Naive thymus-derived CD4-positive, alpha-beta T cell (primary cell): ENCODE measurements at regions of chr11 and their contacts with region 1.

Region 1: GRCh38 chr11:535519-536454 is at the start of gene HRAS:
- DNase-seq: peak; percentile 92 to 99 (median 96)
- ATAC-seq: peak; percentile 93
- H3K4me3 ChIP-seq: peak within 1 kb of the TSS; percentile 66
- H3K4me3 Mint-ChIP-seq: peak within 1 kb of the TSS; percentile 87 to 97 (median 91)
- H3K27ac ChIP-seq: peak within 1 kb of the TSS; percentile 75
- H3K27ac Mint-ChIP-seq: peak within 1 kb of the TSS; percentile 84 to 96 (median 91)
- H3K4me1 ChIP-seq: peaks cover 20 to 21% of the 10 kb centered on the region in 2 donors
- H3K4me1 Mint-ChIP-seq: peaks cover 5 to 16% (median 11%) of the 10 kb centered on the region in 7 donors
- H3K27me3 ChIP-seq: no peaks in the 10 kb centered on the region
- H3K27me3 Mint-ChIP-seq: no peaks in the 10 kb centered on the region
- total RNA-seq, gene HRAS: 22.3 to 52.0 (median 31.9) TPM

Region 2: GRCh38 chr11:406978-407739 is 128.6 kb before region 1 on chr11:
- CTCF ChIA-PET with region 1: no interaction called
- POLR2A ChIA-PET with region 1: interaction called, 3 read pairs
- intact Hi-C with region 1: loop called in 1 of 2 experiments (anchors 2 kb)
- DNase-seq: peak; percentile 80 to 93 (median 92)
- ATAC-seq: peak; percentile 90
- H3K4me3 ChIP-seq: no peak overlapping the region
- H3K4me3 Mint-ChIP-seq: peak overlapping the region in 6 of 10 donors; percentile 12 to 60 (median 38)
- H3K27ac ChIP-seq: peak overlapping the region; percentile 75
- H3K27ac Mint-ChIP-seq: peak overlapping the region in 7 of 9 donors; percentile 21 to 85 (median 51)
- H3K4me1 ChIP-seq: peaks cover 9 to 13% of the 10 kb centered on the region in 2 donors
- H3K4me1 Mint-ChIP-seq: peaks cover 4 to 21% (median 6%) of the 10 kb centered on the region in 7 donors
- H3K27me3 ChIP-seq: no peaks in the 10 kb centered on the region
- H3K27me3 Mint-ChIP-seq: no peaks in the 10 kb centered on the region

Region 3: GRCh38 chr11:518463-519250 is 17.1 kb before region 1 on chr11:
- CTCF ChIA-PET with region 1: interaction called, 7 read pairs
- POLR2A ChIA-PET with region 1: interaction called, 3 read pairs
- intact Hi-C with region 1: loop called (anchors 1 kb)
- DNase-seq: peak; percentile 69 to 94 (median 87)
- ATAC-seq: peak; percentile 99
- H3K4me3 ChIP-seq: peak overlapping the region; percentile 28
- H3K4me3 Mint-ChIP-seq: peak overlapping the region; percentile 81 to 91 (median 87)
- H3K27ac ChIP-seq: peak overlapping the region; percentile 58
- H3K27ac Mint-ChIP-seq: peak overlapping the region; percentile 70 to 92 (median 85)
- H3K4me1 ChIP-seq: peaks cover 4% of the 10 kb centered on the region in 2 donors
- H3K4me1 Mint-ChIP-seq: peaks cover 2 to 8% (median 4%) of the 10 kb centered on the region in 7 donors
- H3K27me3 ChIP-seq: no peaks in the 10 kb centered on the region
- H3K27me3 Mint-ChIP-seq: no peaks in the 10 kb centered on the region

Region 4: DNA sequence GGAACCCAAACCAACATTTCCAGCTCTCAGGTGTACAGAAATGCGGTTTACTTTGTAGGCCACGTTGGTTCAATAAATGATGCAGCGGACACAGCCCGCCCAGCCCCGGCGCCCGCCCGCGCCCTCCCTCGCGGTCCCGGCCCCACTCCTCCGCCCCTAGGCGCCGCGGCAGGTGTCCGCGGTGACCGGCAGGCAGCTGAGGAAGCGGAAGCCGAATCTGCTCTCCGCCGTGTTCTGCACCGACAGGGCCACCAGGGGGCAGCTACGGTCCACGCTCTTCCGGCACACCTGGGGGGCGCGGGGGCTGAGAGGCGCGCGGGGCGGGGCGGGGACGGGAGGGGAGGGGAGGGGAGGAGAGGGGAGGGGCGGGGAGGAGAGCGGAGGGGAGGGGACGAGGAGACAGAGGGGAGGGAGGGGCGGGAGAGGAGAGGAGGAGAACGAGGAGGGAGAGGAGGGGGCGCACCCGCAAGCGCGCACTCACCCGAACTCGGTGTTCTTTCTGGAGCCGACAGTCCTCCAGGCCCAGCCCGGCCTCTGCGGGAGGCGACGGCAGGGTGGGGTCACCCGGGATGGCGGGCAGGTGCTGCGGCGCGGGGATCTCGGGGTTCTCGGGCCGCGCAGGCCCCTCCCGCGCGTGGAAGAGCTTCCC is 19.2 kb after region 1 on chr11:
- CTCF ChIA-PET with region 1: no interaction called
- POLR2A ChIA-PET with region 1: interaction called, 12 read pairs
- intact Hi-C with region 1: loop called (anchors 1 to 2 kb)
- DNase-seq: peak; percentile 60 to 80 (median 72)
- ATAC-seq: peak; percentile 89
- H3K4me3 ChIP-seq: peak overlapping the region; percentile 46
- H3K4me3 Mint-ChIP-seq: peak overlapping the region in 7 of 10 donors; percentile 36 to 69 (median 57)
- H3K27ac ChIP-seq: peak overlapping the region; percentile 44
- H3K27ac Mint-ChIP-seq: no peak overlapping the region
- H3K4me1 ChIP-seq: peaks cover 9 to 16% of the 10 kb centered on the region in 2 donors
- H3K4me1 Mint-ChIP-seq: peaks cover 3 to 8% (median 7%) of the 10 kb centered on the region in 7 donors
- H3K27me3 ChIP-seq: no peaks in the 10 kb centered on the region
- H3K27me3 Mint-ChIP-seq: peaks cover 0 to 18% (median 0%) of the 10 kb centered on the region in 5 donors

Region 5: GRCh38 chr11:560305-561147 is 24.7 kb after region 1 on chr11 and contains the starts of genes LMNTD2 and RASSF7:
- CTCF ChIA-PET with region 1: no interaction called
- POLR2A ChIA-PET with region 1: interaction called, 12 read pairs
- intact Hi-C with region 1: loop called (anchors 1 to 2 kb)
- DNase-seq: peak; percentile 89 to 98 (median 94)
- ATAC-seq: peak; percentile 98
- H3K4me3 ChIP-seq: peak within 1 kb of the TSS; percentile 68
- H3K4me3 Mint-ChIP-seq: peak within 1 kb of the TSS; percentile 78 to 94 (median 89)
- H3K27ac ChIP-seq: peak within 1 kb of the TSS; percentile 82
- H3K27ac Mint-ChIP-seq: peak within 1 kb of the TSS; percentile 35 to 93 (median 84)
- H3K4me1 ChIP-seq: peaks cover 14 to 17% of the 10 kb centered on the region in 2 donors
- H3K4me1 Mint-ChIP-seq: peaks cover 4 to 17% (median 9%) of the 10 kb centered on the region in 7 donors
- H3K27me3 ChIP-seq: no peaks in the 10 kb centered on the region
- H3K27me3 Mint-ChIP-seq: peaks cover 0 to 18% (median 0%) of the 10 kb centered on the region in 5 donors
- total RNA-seq, gene LMNTD2: 2.8 to 14.7 (median 9.6) TPM
- total RNA-seq, gene RASSF7: 20.0 to 45.4 (median 35.5) TPM

Region 6: DNA sequence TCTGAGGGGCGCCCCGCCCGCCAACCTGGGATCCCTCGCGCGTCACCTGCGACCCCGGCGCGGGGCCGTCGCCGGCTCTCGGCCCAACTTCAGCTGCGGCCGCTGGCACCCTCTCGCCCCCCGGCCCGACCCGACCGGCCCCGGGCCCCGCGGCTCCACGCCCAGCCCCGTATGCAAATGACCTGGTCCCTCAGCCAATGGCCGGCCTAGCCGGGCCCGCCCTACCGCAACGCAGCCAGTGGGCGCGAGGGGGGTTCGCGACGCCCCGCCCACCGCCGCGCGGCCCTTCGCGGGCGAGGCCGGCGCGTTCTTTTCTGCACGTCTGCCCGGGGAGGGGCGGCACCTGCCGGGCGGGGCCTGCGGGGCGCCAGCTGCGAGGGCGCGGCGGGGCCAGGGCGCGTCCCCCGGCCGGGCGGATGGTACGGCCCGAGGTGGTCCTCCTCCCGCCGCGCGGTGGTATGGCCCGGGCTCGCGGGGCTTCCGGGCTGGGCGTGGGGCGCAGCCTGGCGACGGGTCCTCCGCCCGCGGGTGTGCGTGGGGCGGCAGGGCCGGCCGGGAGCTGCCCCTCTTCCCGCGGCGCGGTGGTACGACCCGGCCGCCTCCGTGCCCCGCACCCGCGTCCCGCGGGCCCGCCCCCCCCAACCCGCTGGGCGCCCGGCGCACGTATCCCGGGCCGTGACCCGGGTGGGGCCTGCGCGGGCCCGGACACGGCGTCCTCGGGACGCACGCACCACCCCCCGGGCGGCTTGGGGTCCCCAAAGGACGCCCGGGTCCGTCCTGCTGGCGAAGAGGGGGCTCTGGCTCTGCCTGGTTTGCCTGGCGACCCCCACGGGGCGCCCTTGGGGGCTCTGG is 32.7 kb after region 1 on chr11:
- CTCF ChIA-PET with region 1: no interaction called
- POLR2A ChIA-PET with region 1: interaction called, 4 read pairs
- intact Hi-C with region 1: loop called in 1 of 2 experiments (anchors 2 kb)
- DNase-seq: peak; percentile 87 to 99 (median 95)
- ATAC-seq: peak; percentile 95
- H3K4me3 ChIP-seq: peak overlapping the region; percentile 73
- H3K4me3 Mint-ChIP-seq: peak overlapping the region; percentile 69 to 84 (median 77)
- H3K27ac ChIP-seq: peak overlapping the region; percentile 65
- H3K27ac Mint-ChIP-seq: peak overlapping the region in 3 of 9 donors; percentile 40 to 82 (median 68)
- H3K4me1 ChIP-seq: peaks cover 6 to 8% of the 10 kb centered on the region in 2 donors
- H3K4me1 Mint-ChIP-seq: peaks cover 0 to 16% (median 3%) of the 10 kb centered on the region in 7 donors
- H3K27me3 ChIP-seq: no peaks in the 10 kb centered on the region
- H3K27me3 Mint-ChIP-seq: no peaks in the 10 kb centered on the region

Region 7: DNA sequence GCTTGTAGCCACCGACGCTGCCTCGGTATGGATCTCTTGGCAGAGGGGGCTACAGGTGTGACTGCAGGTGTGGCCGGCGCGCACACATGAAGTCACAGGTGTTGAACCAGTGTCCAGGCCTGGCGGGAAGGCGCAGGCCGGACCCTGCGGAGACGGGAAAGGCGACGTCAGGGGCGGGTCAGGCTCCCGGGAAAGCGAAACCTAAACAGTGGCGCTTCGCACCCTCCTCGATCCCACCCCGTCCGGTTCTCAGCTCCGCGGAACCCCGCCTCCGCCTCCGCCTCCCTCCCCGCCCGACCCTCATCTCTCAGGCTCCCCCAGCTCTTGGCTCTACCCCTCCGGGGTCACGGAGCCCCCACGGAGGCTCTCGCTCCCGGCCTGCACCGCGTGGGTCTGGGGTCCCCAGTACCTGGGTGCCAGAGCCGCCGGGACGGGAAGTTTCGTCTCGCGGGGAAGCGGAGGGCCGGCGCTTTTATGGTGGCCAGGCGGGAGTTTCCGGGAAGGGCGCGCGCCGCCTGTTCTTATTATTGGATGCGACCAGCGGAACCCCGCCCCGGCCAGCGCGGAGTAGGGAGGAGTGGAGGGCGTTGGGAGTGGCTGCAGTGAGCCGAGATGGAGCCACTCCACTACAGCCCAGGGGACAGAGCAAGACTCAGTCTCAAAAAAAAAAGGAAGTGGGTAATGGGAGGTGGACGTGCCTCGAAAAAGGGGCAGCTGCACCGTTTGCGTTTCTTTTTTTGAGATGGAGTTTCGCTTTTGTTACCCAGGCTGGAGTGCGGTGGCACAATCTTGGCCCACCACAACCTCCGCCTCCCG is 79.9 kb after region 1 on chr11 and contains the start of gene IRF7:
- CTCF ChIA-PET with region 1: no interaction called
- POLR2A ChIA-PET with region 1: interaction called, 3 read pairs
- intact Hi-C with region 1: loop called in 1 of 2 experiments (anchors 1 kb)
- DNase-seq: peak; percentile 70 to 91 (median 76)
- ATAC-seq: peak; percentile 91
- H3K4me3 ChIP-seq: peak within 1 kb of the TSS; percentile 97
- H3K4me3 Mint-ChIP-seq: peak within 1 kb of the TSS; percentile 80 to 94 (median 92)
- H3K27ac ChIP-seq: peak within 1 kb of the TSS; percentile 95
- H3K27ac Mint-ChIP-seq: peak within 1 kb of the TSS; percentile 83 to 97 (median 93)
- H3K4me1 ChIP-seq: peaks cover 8 to 22% of the 10 kb centered on the region in 2 donors
- H3K4me1 Mint-ChIP-seq: peaks cover 0 to 22% (median 15%) of the 10 kb centered on the region in 7 donors
- H3K27me3 ChIP-seq: no peaks in the 10 kb centered on the region
- H3K27me3 Mint-ChIP-seq: no peaks in the 10 kb centered on the region
- total RNA-seq, gene IRF7: 57.0 to 134 (median 64.6) TPM

Region 8: DNA sequence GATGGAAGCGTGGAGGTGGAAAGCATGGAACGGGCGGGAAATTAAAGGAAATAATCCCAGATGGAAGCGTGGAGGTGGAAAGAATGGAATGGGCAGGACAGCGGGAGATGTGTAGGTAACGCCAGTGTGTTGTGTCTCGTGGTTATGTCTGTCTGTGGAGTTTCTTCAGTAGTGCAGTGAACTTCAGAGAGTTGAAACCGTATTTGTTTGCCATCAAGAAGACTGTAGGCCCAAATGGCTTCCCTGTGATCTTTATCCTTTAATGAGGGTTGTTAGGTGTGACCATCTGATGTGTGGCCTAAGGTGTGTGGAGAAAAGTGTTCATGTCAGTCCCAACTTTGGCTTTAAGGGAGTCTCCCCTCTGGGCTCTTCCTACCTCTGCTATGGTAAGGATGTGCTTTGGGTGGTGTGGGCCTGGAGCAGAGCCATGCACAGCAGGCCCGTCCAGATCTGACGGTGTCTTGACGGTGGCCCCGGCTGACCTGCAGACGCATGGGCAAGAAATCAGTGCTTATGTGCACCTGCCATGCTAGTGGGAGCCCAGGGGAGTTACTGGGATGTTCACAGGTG is 429.5 kb after region 1 on chr11:
- CTCF ChIA-PET with region 1: no interaction called
- POLR2A ChIA-PET with region 1: no interaction called
- intact Hi-C with region 1: no loop called
- DNase-seq: peak in 1 of 9 donors; percentile 13
- ATAC-seq: peak; percentile 23
- H3K4me3 ChIP-seq: no peak overlapping the region
- H3K4me3 Mint-ChIP-seq: no peak overlapping the region
- H3K27ac ChIP-seq: no peak overlapping the region
- H3K27ac Mint-ChIP-seq: no peak overlapping the region
- H3K4me1 ChIP-seq: peaks cover 7% of the 10 kb centered on the region in 2 donors
- H3K4me1 Mint-ChIP-seq: peaks cover 13 to 36% (median 27%) of the 10 kb centered on the region in 7 donors
- H3K27me3 ChIP-seq: no peaks in the 10 kb centered on the region
- H3K27me3 Mint-ChIP-seq: no peaks in the 10 kb centered on the region